ENCODE measurements at regions of chr6 and their contacts with region 1.

Region 1: GRCh38 chr6:165439928-165440554 is 130.6 kb upstream of the C6orf118 start:
- DNase-seq: peak; percentile 48
- H3K4me3 ChIP-seq: no peak overlapping the region
- H3K27ac ChIP-seq: no peak overlapping the region
- H3K4me1 ChIP-seq: no peaks in the 10 kb centered on the region
- H3K27me3 ChIP-seq: no peaks in the 10 kb centered on the region

Region 2: DNA sequence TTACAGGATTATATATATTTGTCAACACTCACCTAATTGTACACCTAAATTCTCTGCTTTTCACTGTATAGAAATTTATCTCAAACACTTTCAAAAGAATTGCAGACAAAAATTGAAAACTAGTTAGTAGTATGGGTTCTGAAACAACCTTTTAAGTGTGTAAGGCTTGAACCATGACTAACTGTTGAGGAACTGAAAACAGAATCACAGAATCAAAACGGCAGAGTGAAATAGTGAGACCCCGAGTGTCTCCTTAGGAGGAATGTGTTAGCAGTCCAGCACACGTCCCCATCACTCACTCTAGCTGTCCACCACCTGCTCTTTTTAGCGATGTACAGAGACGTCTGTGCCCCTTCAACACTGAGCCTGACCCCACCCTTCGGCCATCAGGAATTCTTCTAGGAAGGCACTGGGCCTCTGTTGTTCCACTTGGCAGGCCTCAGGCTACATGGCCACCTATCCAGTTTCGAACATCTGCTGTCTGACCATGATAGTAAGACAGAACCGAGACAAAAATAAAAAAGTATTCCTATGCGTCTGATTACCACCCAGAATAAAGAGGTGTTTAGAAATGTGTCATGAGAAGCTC is 358.0 kb before region 1 on chr6:
- in situ Hi-C with region 1: no loop called
- DNase-seq: no peak
- H3K4me3 ChIP-seq: no peak overlapping the region
- H3K27ac ChIP-seq: no peak overlapping the region
- H3K4me1 ChIP-seq: no peaks in the 10 kb centered on the region
- H3K27me3 ChIP-seq: no peaks in the 10 kb centered on the region

Region 3: DNA sequence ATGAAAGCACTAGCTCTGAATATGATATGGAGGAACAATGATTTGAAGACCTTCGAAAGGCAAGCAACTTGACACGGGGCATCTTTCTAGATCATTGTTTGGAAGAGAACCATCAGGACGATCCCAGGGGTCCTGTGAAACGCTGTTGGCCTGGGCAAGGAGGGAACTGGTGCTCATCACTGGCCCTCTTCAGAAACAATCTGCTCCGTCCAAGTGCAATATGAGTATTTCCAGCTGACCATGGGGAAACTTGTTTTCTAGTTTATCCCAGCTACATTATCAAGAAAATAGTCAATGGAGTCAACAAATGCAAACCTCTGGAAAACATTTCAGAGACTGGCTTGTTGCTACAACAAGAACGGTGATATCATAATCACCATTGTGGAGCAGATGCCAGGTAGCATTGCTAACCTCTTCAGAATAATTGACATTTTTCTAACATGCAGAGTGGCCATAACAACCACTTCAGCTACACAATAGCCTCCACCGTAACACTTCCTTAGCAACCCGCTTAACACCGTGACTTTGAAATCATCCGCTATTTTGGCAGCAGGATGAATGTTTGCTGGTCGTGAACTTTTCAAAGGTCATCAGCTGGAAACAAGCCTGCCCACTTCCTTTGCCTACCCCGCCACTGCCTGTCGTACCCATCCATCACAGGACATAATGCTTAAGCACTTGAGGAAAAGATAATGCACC is 335.0 kb after region 1 on chr6:
- in situ Hi-C with region 1: no loop called
- DNase-seq: no peak
- H3K4me3 ChIP-seq: no peak overlapping the region
- H3K27ac ChIP-seq: no peak overlapping the region
- H3K4me1 ChIP-seq: no peaks in the 10 kb centered on the region
- H3K27me3 ChIP-seq: no peaks in the 10 kb centered on the region

Region 4: DNA sequence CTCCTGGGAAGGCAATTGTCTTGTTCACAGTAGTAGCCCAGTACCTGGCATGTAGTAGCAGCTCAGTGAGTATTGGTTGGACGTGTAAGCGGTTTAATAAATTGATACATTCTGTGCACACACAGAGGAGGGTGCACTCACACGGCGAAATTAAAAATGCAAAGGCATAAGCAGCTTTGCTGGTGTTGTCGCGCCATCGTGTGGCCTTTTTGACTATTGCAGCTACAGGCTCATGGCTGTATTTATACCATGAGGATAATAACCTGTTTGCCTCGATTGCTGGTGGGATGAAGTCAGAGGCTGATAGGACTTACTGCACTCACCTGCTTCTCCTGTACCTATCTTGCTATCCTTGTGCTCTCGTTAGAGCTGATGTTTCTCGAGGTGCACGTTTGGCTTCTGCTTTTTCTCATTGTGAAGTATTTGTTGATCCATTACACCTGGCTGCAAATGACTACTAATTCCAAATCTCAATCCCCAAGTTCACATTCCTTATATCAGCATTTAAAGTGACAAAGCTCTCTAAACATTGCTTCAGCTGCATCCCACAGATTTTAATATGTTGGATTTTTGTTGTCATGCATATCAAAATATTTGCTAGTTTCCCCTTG is 666.1 kb after region 1 on chr6:
- in situ Hi-C with region 1: loop called (anchors 25 kb)
- DNase-seq: peak; percentile 75
- H3K4me3 ChIP-seq: no peak overlapping the region
- H3K27ac ChIP-seq: no peak overlapping the region
- H3K4me1 ChIP-seq: no peaks in the 10 kb centered on the region
- H3K27me3 ChIP-seq: peaks cover 36% of the 10 kb centered on the region

Region 5: GRCh38 chr6:166325383-166326042 is 885.5 kb after region 1 on chr6:
- in situ Hi-C with region 1: no loop called
- DNase-seq: no peak
- H3K4me3 ChIP-seq: no peak overlapping the region
- H3K27ac ChIP-seq: no peak overlapping the region
- H3K4me1 ChIP-seq: 0 out of 2 replicates have a peak, but pooled peaks cover 5% of the 10 kb centered on the region
- H3K27me3 ChIP-seq: no peaks in the 10 kb centered on the region